ENCODE measurements at regions of chr1 and their contacts with region 1.

Region 1: GRCh38 chr1:156728597-156729462 is at the start of gene ISG20L2:
- DNase-seq: peak; percentile 94 to 96
- ATAC-seq: peak; percentile 95 to 97 (median 96)
- H3K4me3 ChIP-seq: peak within 1 kb of the TSS; percentile 57 to 86 (median 78)
- H3K27ac ChIP-seq: peak within 1 kb of the TSS; percentile 92 to 98 (median 95)
- H3K4me1 ChIP-seq: peaks cover 21 to 52% (median 44%) of the 10 kb centered on the region in 9 donors
- H3K27me3 ChIP-seq: no peaks in the 10 kb centered on the region
- CTCF ChIP-seq: no peak
- total RNA-seq, gene ISG20L2: 10.5 to 17.5 (median 15.2) TPM

Region 2: GRCh38 chr1:156625436-156626078 is 103.3 kb before region 1 on chr1:
- intact Hi-C with region 1: loop called in 1 of 10 experiments (anchors 2 kb)
- DNase-seq: peak; percentile 43 to 73
- ATAC-seq: peak; percentile 27 to 75 (median 56)
- H3K4me3 ChIP-seq: peak overlapping the region; percentile 34 to 58 (median 49)
- H3K27ac ChIP-seq: peak overlapping the region in 7 of 10 donors; percentile 31 to 76 (median 64)
- H3K4me1 ChIP-seq: peaks cover 10 to 34% (median 24%) of the 10 kb centered on the region in 9 donors
- H3K27me3 ChIP-seq: peaks cover 19 to 100% (median 70%) of the 10 kb centered on the region in 7 donors
- CTCF ChIP-seq: peak; percentile 54 to 87 (median 81)

Region 3: DNA sequence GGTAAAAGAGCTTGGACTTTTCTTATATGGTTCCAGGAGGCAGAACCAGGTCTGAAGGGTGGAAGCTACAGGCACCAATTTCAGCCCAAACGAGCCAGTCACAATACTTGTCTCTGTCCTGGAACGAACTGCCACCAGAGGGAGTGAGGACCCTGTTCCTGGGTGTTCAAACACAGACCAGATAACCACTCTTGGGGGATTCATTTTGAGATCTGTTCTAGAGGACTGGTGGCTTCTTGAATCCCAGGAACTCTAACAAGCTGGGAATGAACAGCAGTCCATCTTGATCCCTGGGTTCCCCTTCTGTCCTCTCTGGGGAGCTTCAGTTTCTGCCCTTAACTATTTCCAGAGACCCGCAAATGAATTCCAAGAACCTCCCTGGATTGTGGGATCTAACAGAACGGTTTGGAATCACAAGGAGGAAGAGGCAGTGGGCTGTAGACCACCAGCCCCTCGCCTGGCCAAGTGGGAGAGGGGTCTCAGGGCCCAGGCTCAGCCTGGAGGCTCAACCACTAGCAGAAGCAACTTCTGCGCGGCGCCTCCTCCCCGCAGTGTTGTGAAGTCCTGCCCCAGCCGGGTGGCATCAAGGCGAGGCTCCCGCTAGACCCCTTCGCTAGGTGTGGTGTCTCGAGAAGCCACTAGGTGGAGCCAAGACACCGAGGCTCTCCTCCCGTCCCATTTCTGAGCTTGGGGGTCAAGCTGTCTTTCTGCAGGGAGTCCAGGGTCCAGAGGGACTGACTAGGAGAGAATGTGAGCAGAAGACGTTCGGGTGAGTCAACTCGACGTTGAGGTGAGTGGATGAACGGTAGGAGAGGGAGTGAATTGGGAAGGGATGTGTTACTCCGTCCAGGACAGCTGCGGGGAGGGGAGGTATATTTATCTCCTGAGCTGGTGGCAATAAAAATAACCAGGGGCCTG is 39.5 kb before region 1 on chr1:
- intact Hi-C with region 1: loop called in 8 of 10 experiments (anchors 1 to 2 kb)
- DNase-seq: peak; percentile 71 to 74
- ATAC-seq: peak; percentile 82 to 94 (median 91)
- H3K4me3 ChIP-seq: peak overlapping the region in 4 of 10 donors; percentile 1 to 36 (median 17)
- H3K27ac ChIP-seq: no peak overlapping the region
- H3K4me1 ChIP-seq: peaks cover 0 to 26% (median 17%) of the 10 kb centered on the region in 9 donors
- H3K27me3 ChIP-seq: peaks cover 0 to 90% (median 52%) of the 10 kb centered on the region in 7 donors
- CTCF ChIP-seq: peak; percentile 87 to 96 (median 93)

Region 4: DNA sequence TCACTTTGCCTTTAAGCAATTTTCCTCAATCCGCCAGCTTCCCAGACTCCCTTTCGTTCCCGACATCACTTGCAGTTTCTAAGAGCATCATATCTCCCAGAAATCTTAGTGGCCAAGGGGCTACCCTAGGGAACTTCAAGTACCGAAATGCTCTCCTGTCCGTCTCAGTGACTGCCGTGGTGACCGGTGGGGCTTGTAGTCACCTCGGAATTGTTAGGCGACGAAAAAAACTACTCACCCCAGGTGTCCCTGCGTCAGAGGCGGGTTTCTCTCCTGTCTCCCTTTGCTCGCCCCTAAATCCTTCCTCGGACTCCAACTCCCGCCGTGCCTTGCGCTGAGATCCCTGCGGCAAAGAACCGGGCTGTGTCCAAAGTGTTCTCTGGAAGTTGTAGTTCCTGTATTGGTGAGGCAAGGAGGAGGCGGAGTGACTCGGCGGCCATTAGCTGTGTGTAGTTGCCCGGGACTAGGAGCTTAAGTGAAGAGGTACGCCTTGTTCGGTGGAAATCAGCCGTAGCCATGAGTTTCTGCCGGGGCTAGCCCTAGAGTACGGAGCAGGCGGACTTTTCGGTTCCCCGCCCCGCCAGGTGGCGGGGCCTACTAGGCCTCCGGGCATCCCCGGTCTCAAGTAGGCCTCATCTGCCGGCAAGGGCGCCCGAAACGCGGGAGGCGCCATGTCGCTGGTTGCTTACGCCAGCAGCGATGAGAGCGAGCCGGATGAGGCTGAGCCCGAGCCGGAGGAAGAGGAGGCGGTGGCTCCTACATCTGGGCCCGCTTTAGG is 38.5 kb after region 1 on chr1 and contains the start of gene PRCC:
- intact Hi-C with region 1: loop called in 7 of 10 experiments (anchors 1 to 5 kb)
- DNase-seq: peak; percentile 94 to 99
- ATAC-seq: peak; percentile 96 to 98 (median 97)
- H3K4me3 ChIP-seq: peak within 1 kb of the TSS; percentile 73 to 99 (median 95)
- H3K27ac ChIP-seq: peak within 1 kb of the TSS; percentile 90 to 98 (median 96)
- H3K4me1 ChIP-seq: peaks cover 12 to 53% (median 45%) of the 10 kb centered on the region in 9 donors
- H3K27me3 ChIP-seq: no peaks in the 10 kb centered on the region
- CTCF ChIP-seq: no peak
- total RNA-seq, gene PRCC: 32.1 to 56.9 (median 44.2) TPM

Region 5: GRCh38 chr1:156801409-156802121 is 72.7 kb after region 1 on chr1:
- intact Hi-C with region 1: no loop called
- DNase-seq: no peak
- ATAC-seq: peak; percentile 44 to 72 (median 60)
- H3K4me3 ChIP-seq: no peak overlapping the region
- H3K27ac ChIP-seq: peak overlapping the region in 3 of 10 donors; percentile 19 to 44 (median 27)
- H3K4me1 ChIP-seq: peaks cover 2 to 54% (median 44%) of the 10 kb centered on the region in 9 donors
- H3K27me3 ChIP-seq: no peaks in the 10 kb centered on the region
- CTCF ChIP-seq: peak in 7 of 9 donors; percentile 13 to 51 (median 33)

Region 6: GRCh38 chr1:156927215-156928042 is 198.6 kb after region 1 on chr1:
- intact Hi-C with region 1: loop called in 1 of 10 experiments (anchors 10 kb)
- DNase-seq: peak; percentile 60 to 76
- ATAC-seq: peak; percentile 53 to 77 (median 70)
- H3K4me3 ChIP-seq: peak overlapping the region in 9 of 10 donors; percentile 14 to 48 (median 37)
- H3K27ac ChIP-seq: no peak overlapping the region
- H3K4me1 ChIP-seq: peaks cover 10 to 38% (median 32%) of the 10 kb centered on the region in 9 donors
- H3K27me3 ChIP-seq: peaks cover 23 to 78% (median 67%) of the 10 kb centered on the region in 7 donors
- CTCF ChIP-seq: peak; percentile 29 to 81 (median 63)